ENCODE measurements at regions of chr19 and their contacts with region 1.

Region 1: DNA sequence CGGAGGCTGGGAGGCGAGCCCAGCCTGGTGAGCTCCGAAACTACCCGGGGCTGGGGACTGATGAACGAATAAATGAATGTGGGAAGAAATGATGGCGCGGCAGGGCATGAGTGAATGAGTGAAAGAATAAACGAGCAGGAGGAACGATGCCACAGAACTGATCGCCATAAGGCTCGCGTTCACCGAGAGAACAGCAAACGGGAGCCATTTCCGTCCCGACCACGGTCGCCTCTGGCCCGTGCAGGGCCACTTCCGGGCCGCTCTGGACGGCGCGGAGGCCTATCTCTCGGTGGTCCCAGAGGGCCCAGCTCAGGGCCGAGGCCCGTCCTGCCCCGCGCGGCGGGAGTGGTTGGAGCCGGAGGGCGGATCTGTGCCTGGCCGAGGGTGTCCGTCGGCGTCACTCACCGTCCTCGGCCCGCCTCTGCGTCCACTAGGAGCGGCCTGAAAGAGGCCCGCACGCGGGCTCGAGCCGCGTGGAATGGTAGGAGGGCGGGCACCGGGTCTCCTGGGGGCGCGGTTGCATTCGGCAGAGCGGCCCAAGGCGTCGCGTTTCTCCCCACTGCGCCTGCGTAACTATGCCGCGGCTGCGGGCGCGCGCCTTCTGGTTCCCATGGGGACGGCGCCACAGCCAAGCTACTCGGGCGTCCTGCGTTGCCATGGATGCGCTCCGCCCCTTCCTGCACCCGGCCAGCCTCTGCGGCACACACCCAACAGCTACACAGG is at the start of gene ZNF497:
- DNase-seq: peak; percentile 99
- H3K4me3 ChIP-seq: peak within 1 kb of the TSS; percentile 77 to 95
- H3K27ac ChIP-seq: peak within 1 kb of the TSS; percentile 97 to 98
- H3K4me1 ChIP-seq: peaks cover 0 to 8% of the 10 kb centered on the region in 2 experiments; a peak in 2 of 4 replicates
- H3K27me3 ChIP-seq: no peaks in the 10 kb centered on the region
- CTCF ChIP-seq: no peak
- EP300 ChIP-seq: no peak
- RAD21 ChIP-seq: no peak
- polyA plus RNA-seq, gene ZNF497: 1.0 and 1.1 TPM in 2 replicates

Region 2: GRCh38 chr19:58326914-58327726 is 35.3 kb before region 1 on chr19 and contains the start of gene ZSCAN22:
- CTCF ChIA-PET with region 1: interaction called, 3 read pairs
- POLR2A ChIA-PET with region 1: interaction called, 13 read pairs
- DNase-seq: peak; percentile 94
- H3K4me3 ChIP-seq: peak within 1 kb of the TSS; percentile 70 to 89
- H3K27ac ChIP-seq: peak within 1 kb of the TSS; percentile 83 to 90
- H3K4me1 ChIP-seq: peaks cover 0 to 19% of the 10 kb centered on the region in 2 experiments; a peak in 1 of 4 replicates
- H3K27me3 ChIP-seq: no peaks in the 10 kb centered on the region
- CTCF ChIP-seq: no peak
- EP300 ChIP-seq: no peak; a peak in 1 of 4 replicates
- RAD21 ChIP-seq: no peak
- polyA plus RNA-seq, gene ZSCAN22: 2.3 and 2.9 TPM in 2 replicates

Region 3: DNA sequence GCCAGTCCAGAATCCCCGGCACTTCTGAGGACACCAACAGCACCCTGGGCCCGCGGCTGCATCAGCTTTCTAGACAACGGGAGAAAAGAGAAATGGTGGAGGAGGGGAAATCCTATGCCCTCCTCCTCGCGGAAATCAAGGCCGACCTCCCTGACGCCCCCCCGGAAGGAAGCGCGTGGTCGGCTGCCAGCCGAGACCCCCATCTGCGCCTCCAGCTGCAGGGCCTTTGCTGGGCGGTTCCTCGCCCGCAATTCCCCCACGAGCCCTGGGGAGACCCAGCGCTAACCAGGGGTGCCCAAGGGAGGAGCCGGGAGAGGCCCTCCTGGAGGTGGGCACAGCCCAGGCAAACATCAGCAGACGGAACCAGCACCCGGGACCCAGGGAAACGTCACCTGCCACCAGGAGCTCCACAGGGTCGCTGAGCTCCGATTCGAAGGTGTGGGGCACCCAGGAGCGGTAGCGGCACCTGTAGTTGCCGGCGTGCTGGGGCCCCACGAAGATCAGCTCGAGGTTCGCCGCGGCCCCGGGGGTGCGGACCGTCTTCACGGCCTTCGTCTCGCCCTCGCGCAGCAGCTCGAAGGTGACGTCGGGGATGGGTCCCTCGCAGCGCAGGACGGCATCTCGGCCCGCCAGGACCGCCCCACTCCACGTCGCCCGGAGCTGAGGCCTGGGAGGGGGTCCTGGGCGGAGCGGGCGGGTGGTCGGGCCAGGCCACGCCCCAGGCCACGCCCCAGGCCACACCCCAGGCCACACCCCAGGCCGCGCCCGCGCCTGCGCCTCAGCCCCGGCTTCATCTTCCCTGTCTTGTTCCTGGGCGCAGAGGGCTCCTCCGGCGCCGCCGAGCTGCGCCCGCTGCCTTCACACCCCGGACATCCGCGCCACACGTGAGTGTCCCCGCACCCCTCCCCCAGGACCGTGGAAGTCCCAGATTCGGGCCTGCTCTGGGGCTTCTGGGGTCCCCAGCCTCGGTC is 15.2 kb before region 1 on chr19:
- CTCF ChIA-PET with region 1: interaction called, 12 read pairs
- POLR2A ChIA-PET with region 1: interaction called, 34 read pairs
- DNase-seq: peak; percentile 100
- H3K4me3 ChIP-seq: peak overlapping the region; percentile 73 to 87
- H3K27ac ChIP-seq: peak overlapping the region; percentile 64 to 74; a peak in 2 of 4 replicates
- H3K4me1 ChIP-seq: peaks cover 0 to 6% of the 10 kb centered on the region in 2 experiments; a peak in 2 of 4 replicates
- H3K27me3 ChIP-seq: no peaks in the 10 kb centered on the region
- CTCF ChIP-seq: no peak
- EP300 ChIP-seq: no peak
- RAD21 ChIP-seq: no peak

Measured in SK-N-SH (cell line).